HCT116 (cell line): ENCODE measurements at regions of chr17 and their contacts with region 1.

Region 1: GRCh38 chr17:47352848-47353247 is 29.1 kb downstream of the EFCAB13 start:
- DNase-seq: no peak
- ATAC-seq: no peak
- H3K4me3 ChIP-seq: no peak overlapping the region
- H3K27ac ChIP-seq: no peak overlapping the region
- H3K4me1 ChIP-seq: no peaks in the 10 kb centered on the region
- H3K27me3 ChIP-seq: no peaks in the 10 kb centered on the region
- CTCF ChIP-seq: no peak
- POLR2A ChIP-seq: no peak
- RAD21 ChIP-seq: no peak

Region 2: GRCh38 chr17:47335101-47335936 is 17.5 kb before region 1 on chr17:
- CTCF ChIA-PET with region 1: no interaction called
- POLR2A ChIA-PET with region 1: no interaction called
- RAD21 ChIA-PET with region 1: no interaction called
- intact Hi-C with region 1: loop called (anchors 1 kb)
- DNase-seq: no peak
- ATAC-seq: no peak
- H3K4me3 ChIP-seq: no peak overlapping the region
- H3K27ac ChIP-seq: no peak overlapping the region
- H3K4me1 ChIP-seq: no peaks in the 10 kb centered on the region
- H3K27me3 ChIP-seq: no peaks in the 10 kb centered on the region
- CTCF ChIP-seq: no peak
- POLR2A ChIP-seq: no peak
- RAD21 ChIP-seq: no peak